ENCODE measurements at regions of chr20 and their contacts with region 1.

Region 1: GRCh38 chr20:40945754-40946450 is 82.7 kb upstream of the TOP1 start:
- DNase-seq: peak; percentile 38
- H3K4me3 Mint-ChIP-seq: no peak overlapping the region
- H3K27ac Mint-ChIP-seq: no peak overlapping the region
- H3K4me1 Mint-ChIP-seq: no peaks in the 10 kb centered on the region
- H3K27me3 Mint-ChIP-seq: peaks cover 2% of the 10 kb centered on the region

Region 2: DNA sequence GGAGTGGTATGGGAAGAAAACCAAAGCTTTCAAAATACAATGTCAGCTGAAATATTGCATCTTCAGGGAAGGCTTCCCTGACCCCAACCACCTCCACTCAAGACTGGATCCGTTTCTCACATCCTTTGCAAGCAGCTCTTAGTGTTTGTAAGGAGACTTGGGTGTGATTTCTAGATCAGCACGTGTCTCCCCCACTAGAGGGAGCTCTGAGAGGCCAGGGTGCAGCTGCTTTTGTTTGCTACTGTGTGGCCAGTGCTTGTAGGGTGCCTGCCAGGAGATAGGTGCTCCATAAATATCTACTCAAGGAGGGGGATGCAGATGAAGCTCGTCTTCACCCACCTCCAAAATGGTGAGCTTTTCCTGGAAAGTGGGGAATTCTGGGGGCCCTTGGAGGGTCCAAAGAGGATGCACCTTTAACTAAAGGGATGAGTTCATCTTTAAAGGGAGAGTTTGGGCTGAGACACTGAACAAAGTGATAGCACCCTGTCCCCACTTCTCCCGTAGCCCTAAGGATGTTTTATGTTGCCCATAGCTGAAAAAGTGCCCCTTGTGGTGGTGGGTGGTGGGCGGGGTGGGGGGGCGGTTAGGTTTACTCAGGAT is 204.3 kb before region 1 on chr20:
- CTCF ChIA-PET with region 1: no interaction called
- intact Hi-C with region 1: loop called (anchors 5 kb)
- DNase-seq: peak; percentile 60
- H3K4me3 Mint-ChIP-seq: no peak overlapping the region
- H3K27ac Mint-ChIP-seq: no peak overlapping the region
- H3K4me1 Mint-ChIP-seq: no peaks in the 10 kb centered on the region
- H3K27me3 Mint-ChIP-seq: peaks cover 7% of the 10 kb centered on the region

Region 3: DNA sequence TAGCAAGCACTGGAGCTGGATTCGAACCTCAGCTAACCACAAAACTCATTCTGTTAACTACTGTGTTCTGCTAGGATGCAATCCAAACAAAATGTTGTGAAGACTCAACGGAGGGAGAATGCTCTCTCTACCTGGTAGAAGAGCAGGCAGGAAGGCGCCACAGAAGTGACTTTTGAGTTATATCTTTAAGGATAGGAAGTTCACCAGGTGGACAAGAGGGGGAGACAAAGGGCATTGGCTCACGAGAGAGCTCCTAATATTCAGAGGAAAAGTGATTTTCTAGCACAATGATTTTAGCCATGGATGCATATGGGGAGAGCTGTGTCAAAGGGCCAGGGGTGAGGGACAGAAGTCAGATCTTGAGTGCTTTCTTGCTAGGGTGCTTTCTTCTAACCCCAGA is 148.5 kb before region 1 on chr20:
- CTCF ChIA-PET with region 1: no interaction called
- intact Hi-C with region 1: loop called (anchors 5 kb)
- DNase-seq: no peak
- H3K4me3 Mint-ChIP-seq: no peak overlapping the region
- H3K27ac Mint-ChIP-seq: no peak overlapping the region
- H3K4me1 Mint-ChIP-seq: no peaks in the 10 kb centered on the region
- H3K27me3 Mint-ChIP-seq: no peaks in the 10 kb centered on the region

Region 4: DNA sequence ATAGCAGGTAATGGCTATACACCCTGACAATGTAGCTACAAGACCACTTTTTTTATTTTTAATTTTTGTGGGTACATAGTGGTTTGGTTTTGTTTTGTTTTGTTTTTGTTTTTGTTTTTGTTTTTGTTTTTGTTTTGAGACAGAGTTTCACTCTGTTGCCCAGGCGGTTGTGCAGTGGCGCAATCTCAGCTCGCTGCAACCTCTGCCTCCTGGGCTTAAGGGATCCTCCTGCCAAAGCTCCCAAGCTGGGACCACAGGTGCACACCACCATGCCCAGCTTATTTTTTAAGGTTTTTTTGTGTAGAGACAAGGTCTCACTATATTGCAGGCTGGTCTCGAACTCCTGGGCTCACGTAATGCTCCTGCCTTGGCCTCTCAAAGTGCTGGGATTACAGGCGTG is 26.2 kb after region 1 on chr20:
- CTCF ChIA-PET with region 1: no interaction called
- intact Hi-C with region 1: no loop called
- DNase-seq: no peak
- H3K4me3 Mint-ChIP-seq: no peak overlapping the region
- H3K27ac Mint-ChIP-seq: no peak overlapping the region
- H3K4me1 Mint-ChIP-seq: peaks cover 6% of the 10 kb centered on the region
- H3K27me3 Mint-ChIP-seq: peaks cover 10% of the 10 kb centered on the region

Region 5: GRCh38 chr20:41003143-41003883 is 57.4 kb after region 1 on chr20:
- CTCF ChIA-PET with region 1: no interaction called
- intact Hi-C with region 1: no loop called
- DNase-seq: peak; percentile 77
- H3K4me3 Mint-ChIP-seq: peak overlapping the region; percentile 45
- H3K27ac Mint-ChIP-seq: peak overlapping the region; percentile 90
- H3K4me1 Mint-ChIP-seq: peaks cover 22% of the 10 kb centered on the region
- H3K27me3 Mint-ChIP-seq: no peaks in the 10 kb centered on the region

Measured in activated naive CD4-positive, alpha-beta T cell treated with anti-CD3 and anti-CD28 coated beads for 36 hours (primary cell).